ENCODE measurements at regions of chr1 and their contacts with region 1.

Region 1: DNA sequence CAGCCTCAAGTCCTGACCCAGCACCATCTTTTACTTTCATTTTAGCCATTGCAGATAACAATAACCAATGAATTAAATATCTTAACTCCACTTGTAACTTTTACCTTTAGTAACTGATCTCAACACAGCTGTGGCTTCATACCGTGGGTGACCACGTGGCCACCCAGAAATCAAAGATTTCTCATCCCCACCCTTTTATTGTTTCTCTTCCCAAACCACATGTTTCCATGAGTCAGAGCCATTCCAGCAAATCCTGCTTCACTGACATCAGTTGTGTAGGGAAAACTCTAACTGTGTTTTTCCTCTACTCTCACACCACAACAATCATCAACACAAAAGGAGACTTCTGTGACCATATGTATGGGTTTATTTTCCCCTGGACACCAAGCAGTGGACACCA is 25.1 kb upstream of the BRDT start:
- DNase-seq: peak; percentile 55
- ATAC-seq: 0 out of 2 replicates have a peak, but pooled peaks have one; percentile 20
- H3K4me3 ChIP-seq: no peak overlapping the region
- H3K27ac ChIP-seq: no peak overlapping the region
- H3K4me1 ChIP-seq: no peaks in the 10 kb centered on the region; the same call in 1 of the 2 replicates
- H3K27me3 ChIP-seq: no peaks in the 10 kb centered on the region
- CTCF ChIP-seq: no peak

Region 2: DNA sequence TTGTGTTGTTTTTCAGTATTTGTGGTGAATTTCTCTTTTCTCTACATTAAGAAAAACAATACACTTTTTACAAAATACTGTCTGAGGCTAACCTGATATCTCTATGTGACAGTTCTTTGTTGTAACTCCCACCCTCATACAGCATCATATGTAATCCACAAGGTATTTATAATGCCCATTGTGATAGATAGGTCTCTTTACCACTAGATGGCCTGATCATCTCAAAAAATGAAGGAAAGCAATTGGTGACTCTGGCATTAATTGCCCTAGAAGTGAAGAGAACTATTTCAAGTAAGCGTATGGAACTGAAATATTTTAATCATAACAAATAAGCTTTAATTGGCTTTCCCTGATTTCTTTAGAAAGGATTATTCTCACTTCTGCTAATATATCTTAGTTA is 483.3 kb before region 1 on chr1:
- CTCF ChIA-PET with region 1: no interaction called
- POLR2A ChIA-PET with region 1: no interaction called
- intact Hi-C with region 1: loop called (anchors 2 kb)
- DNase-seq: peak; percentile 56
- ATAC-seq: peak; percentile 70
- H3K4me3 ChIP-seq: no peak overlapping the region
- H3K27ac ChIP-seq: no peak overlapping the region
- H3K4me1 ChIP-seq: no peaks in the 10 kb centered on the region
- H3K27me3 ChIP-seq: peaks cover 24% of the 10 kb centered on the region
- CTCF ChIP-seq: peak; percentile 60

Region 3: DNA sequence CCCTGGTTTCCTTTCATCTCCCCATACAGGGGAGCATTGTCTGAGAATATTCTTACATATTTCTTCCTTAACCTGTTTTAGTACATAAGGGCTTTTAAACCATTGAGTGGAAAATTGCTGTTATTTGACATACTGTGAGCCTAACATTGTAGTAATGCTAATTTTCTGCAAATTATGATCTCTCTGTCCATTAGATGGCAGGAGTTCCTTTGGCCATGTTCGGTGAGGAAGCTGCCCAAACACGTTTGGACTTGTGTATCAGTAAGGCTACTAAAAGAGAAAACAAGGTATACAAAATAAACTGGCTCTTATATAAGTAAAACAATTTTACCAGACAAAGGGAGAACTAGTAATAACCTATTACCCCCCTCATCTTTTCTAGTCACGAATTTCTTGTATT is 394.3 kb before region 1 on chr1:
- CTCF ChIA-PET with region 1: no interaction called
- POLR2A ChIA-PET with region 1: no interaction called
- intact Hi-C with region 1: loop called (anchors 1 kb)
- DNase-seq: peak; percentile 58
- ATAC-seq: peak; percentile 73
- H3K4me3 ChIP-seq: no peak overlapping the region
- H3K27ac ChIP-seq: no peak overlapping the region
- H3K4me1 ChIP-seq: no peaks in the 10 kb centered on the region
- H3K27me3 ChIP-seq: no peaks in the 10 kb centered on the region
- CTCF ChIP-seq: peak; percentile 71

Region 4: DNA sequence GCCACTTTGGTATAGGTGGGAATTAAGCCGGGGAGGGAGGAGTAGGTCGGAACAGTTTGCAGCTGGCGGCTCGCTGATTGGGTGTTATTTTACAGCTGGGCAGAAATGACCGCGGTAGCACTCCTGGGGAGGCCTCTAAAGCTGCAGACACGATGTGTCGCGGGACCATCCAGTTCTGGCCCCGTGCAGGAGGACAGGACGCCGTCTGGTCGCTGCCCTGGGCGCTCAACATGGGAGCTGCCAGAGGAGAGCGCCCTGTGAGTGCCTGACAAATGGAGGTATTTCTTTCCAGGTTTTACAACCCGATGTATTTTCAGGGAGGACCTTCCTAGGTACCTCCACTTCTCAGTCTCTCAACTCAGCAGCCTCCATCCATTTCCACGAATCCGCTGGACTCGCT is 377.3 kb before region 1 on chr1:
- CTCF ChIA-PET with region 1: no interaction called
- POLR2A ChIA-PET with region 1: no interaction called
- intact Hi-C with region 1: loop called (anchors 1 kb)
- DNase-seq: peak; percentile 52
- ATAC-seq: peak; percentile 88
- H3K4me3 ChIP-seq: no peak overlapping the region
- H3K27ac ChIP-seq: no peak overlapping the region
- H3K4me1 ChIP-seq: no peaks in the 10 kb centered on the region
- H3K27me3 ChIP-seq: no peaks in the 10 kb centered on the region
- CTCF ChIP-seq: peak; percentile 68

Measured in PC-3 (cell line).